Activated CD8-positive, alpha-beta memory T cell treated with anti-CD3 and anti-CD28 coated beads, Interleukin-2, amount 10 ng/mL, durations not matched to agents 7 days and 5 days (primary cell): ENCODE measurements at regions of chr12 and their contacts with region 1.

Region 1: GRCh38 chr12:49673446-49674317 is 33.5 kb downstream of the FMNL3 start:
- DNase-seq: no peak
- ATAC-seq: no peak
- H3K4me3 Mint-ChIP-seq: no peak overlapping the region
- H3K27ac Mint-ChIP-seq: peak overlapping the region; percentile 75
- H3K4me1 Mint-ChIP-seq: peaks cover 70% of the 10 kb centered on the region
- H3K27me3 Mint-ChIP-seq: no peaks in the 10 kb centered on the region

Region 2: GRCh38 chr12:49644620-49644994 is 29.1 kb before region 1 on chr12:
- CTCF ChIA-PET with region 1: interaction called, 19 read pairs
- DNase-seq: peak; percentile 88
- ATAC-seq: peak; percentile 96
- H3K4me3 Mint-ChIP-seq: no peak overlapping the region
- H3K27ac Mint-ChIP-seq: peak overlapping the region; percentile 80
- H3K4me1 Mint-ChIP-seq: peaks cover 14% of the 10 kb centered on the region
- H3K27me3 Mint-ChIP-seq: no peaks in the 10 kb centered on the region

Region 3: GRCh38 chr12:49662998-49663843 is 10.5 kb before region 1 on chr12:
- CTCF ChIA-PET with region 1: interaction called, 10 read pairs
- DNase-seq: peak; percentile 90
- ATAC-seq: peak; percentile 98
- H3K4me3 Mint-ChIP-seq: peak overlapping the region; percentile 48
- H3K27ac Mint-ChIP-seq: peak overlapping the region; percentile 94
- H3K4me1 Mint-ChIP-seq: peaks cover 62% of the 10 kb centered on the region
- H3K27me3 Mint-ChIP-seq: no peaks in the 10 kb centered on the region

Region 4: GRCh38 chr12:49687941-49688340 is 14.3 kb after region 1 on chr12:
- CTCF ChIA-PET with region 1: interaction called, 17 read pairs
- DNase-seq: no peak
- ATAC-seq: no peak
- H3K4me3 Mint-ChIP-seq: no peak overlapping the region
- H3K27ac Mint-ChIP-seq: no peak overlapping the region
- H3K4me1 Mint-ChIP-seq: peaks cover 31% of the 10 kb centered on the region
- H3K27me3 Mint-ChIP-seq: no peaks in the 10 kb centered on the region

Region 5: DNA sequence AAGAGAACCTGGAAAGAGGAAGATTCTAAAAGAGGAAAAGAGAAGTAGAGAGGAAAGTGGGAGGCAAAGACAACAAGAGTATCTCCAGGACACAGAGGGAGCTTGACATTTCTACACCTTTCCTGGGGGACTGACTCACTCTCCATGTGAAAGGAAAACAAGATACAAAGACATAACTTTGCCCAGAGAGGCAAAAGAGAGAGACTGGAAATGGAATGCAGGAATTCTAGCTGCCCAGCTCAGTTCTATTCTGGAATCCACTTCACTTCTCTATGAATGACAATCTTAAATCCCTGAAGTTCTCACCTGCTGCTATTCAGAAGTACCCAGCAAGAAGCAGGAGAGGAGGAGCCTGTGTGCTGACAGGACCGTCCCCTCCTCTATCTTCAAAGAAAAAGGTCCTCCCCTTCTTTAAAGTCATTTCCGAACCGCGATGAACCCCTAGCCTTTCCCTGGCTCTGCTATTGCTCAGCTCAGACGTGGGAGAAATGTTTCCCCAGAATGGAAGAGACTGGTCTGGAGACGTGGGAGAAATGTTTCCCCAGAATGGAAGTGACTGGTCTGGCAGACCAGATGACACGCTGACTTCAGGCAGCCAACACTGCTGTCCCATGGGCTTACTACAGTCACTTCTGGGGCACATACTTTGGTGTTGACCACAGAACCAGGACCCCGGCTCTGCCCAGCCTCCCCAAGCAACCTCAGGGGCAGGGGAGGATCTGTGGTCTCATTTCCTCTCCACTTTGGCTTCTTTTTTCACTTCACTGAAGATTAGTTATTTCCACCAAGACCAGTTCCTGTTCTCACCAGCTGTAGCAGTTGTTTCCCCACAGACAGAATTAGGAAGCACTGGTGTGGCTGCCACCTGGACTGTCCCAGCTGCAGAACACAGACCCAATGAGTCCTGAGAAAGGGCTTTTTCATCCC is 25.2 kb after region 1 on chr12:
- CTCF ChIA-PET with region 1: interaction called, 24 read pairs
- DNase-seq: peak; percentile 79
- ATAC-seq: peak; percentile 81
- H3K4me3 Mint-ChIP-seq: peak overlapping the region; percentile 66
- H3K27ac Mint-ChIP-seq: peak overlapping the region; percentile 92
- H3K4me1 Mint-ChIP-seq: peaks cover 41% of the 10 kb centered on the region
- H3K27me3 Mint-ChIP-seq: no peaks in the 10 kb centered on the region